ENCODE measurements at regions of chr1 and their contacts with region 1.

Region 1: GRCh38 chr1:167517535-167518330 is 596 bp downstream of the CD247 start:
- DNase-seq: peak; percentile 56 to 92 (median 86)
- ATAC-seq: peak; percentile 75
- H3K4me3 ChIP-seq: peak overlapping the region; percentile 94 to 98
- H3K4me3 Mint-ChIP-seq: peak overlapping the region; percentile 99
- H3K27ac ChIP-seq: peak overlapping the region; percentile 94 to 95
- H3K27ac Mint-ChIP-seq: peak overlapping the region; percentile 100
- H3K4me1 ChIP-seq: peaks cover 40% of the 10 kb centered on the region
- H3K4me1 Mint-ChIP-seq: peaks cover 51% of the 10 kb centered on the region
- H3K27me3 ChIP-seq: no peaks in the 10 kb centered on the region
- H3K27me3 Mint-ChIP-seq: no peaks in the 10 kb centered on the region
- CTCF ChIP-seq: no peak

Region 2: DNA sequence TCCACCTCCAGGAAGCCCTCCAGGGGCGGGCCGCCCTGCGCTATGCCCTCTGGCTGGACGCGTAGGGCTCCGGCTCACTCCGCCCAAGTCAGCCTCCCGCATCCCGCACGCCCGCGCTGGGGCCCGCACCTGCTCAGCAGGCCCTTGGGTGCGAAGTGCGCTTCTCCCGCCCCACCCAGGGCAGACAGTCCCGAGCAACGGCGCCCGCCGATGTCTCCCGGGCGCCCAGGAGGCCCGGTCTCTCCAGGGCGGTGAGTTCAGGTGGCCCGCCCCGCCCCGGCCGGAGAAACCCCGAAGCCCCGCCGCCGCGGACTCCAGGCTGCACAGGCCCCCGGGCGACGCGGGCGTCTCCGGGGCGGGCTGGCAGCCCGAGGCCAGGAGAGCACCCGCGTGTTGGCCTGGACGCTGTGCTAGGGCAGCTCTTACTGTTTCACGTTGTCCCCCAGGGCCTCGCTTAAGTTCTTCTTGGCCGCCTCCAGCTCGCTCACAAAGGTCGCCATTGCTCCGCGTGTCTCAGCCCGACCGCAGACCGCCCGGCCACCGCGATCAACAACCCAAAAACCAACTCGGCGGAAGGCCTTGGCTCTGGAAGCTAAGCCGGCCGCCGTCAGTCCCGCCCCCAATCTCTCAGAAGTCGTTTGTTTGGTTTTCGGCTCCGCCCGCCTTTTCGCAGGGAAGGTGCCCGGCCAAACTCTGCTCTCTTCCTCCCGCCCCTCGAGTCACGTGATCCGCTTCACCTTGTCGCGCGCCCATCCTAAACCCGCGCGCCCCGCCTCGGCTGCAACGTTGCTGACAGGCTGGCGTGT is 641.8 kb before region 1 on chr1 and contains the start of gene TADA1:
- CTCF ChIA-PET with region 1: no interaction called
- POLR2A ChIA-PET with region 1: interaction called, 3 read pairs
- intact Hi-C with region 1: loop called (anchors 5 to 10 kb)
- DNase-seq: peak; percentile 96 to 99 (median 98)
- ATAC-seq: peak; percentile 90
- H3K4me3 ChIP-seq: peak within 1 kb of the TSS; percentile 71 to 84
- H3K4me3 Mint-ChIP-seq: peak within 1 kb of the TSS; percentile 97
- H3K27ac ChIP-seq: peak within 1 kb of the TSS; percentile 74 to 79
- H3K27ac Mint-ChIP-seq: peak within 1 kb of the TSS; percentile 99
- H3K4me1 ChIP-seq: peaks cover 18% of the 10 kb centered on the region
- H3K4me1 Mint-ChIP-seq: peaks cover 49% of the 10 kb centered on the region
- H3K27me3 ChIP-seq: no peaks in the 10 kb centered on the region
- H3K27me3 Mint-ChIP-seq: no peaks in the 10 kb centered on the region
- CTCF ChIP-seq: no peak
- total RNA-seq, gene TADA1: 16.7 to 18.5 TPM

Region 3: GRCh38 chr1:167442124-167442848 is 75.4 kb before region 1 on chr1:
- CTCF ChIA-PET with region 1: interaction called, 55 read pairs
- POLR2A ChIA-PET with region 1: interaction called, 51 read pairs
- intact Hi-C with region 1: loop called (anchors 1 to 5 kb)
- DNase-seq: peak; percentile 78 to 91 (median 89)
- ATAC-seq: peak; percentile 80
- H3K4me3 ChIP-seq: no peak overlapping the region
- H3K4me3 Mint-ChIP-seq: no peak overlapping the region
- H3K27ac ChIP-seq: peak overlapping the region in 1 of 2 experiments; percentile 71
- H3K27ac Mint-ChIP-seq: peak overlapping the region; percentile 85
- H3K4me1 ChIP-seq: peaks cover 81% of the 10 kb centered on the region
- H3K4me1 Mint-ChIP-seq: peaks cover 91% of the 10 kb centered on the region
- H3K27me3 ChIP-seq: no peaks in the 10 kb centered on the region
- H3K27me3 Mint-ChIP-seq: no peaks in the 10 kb centered on the region
- CTCF ChIP-seq: peak; percentile 75

Region 4: DNA sequence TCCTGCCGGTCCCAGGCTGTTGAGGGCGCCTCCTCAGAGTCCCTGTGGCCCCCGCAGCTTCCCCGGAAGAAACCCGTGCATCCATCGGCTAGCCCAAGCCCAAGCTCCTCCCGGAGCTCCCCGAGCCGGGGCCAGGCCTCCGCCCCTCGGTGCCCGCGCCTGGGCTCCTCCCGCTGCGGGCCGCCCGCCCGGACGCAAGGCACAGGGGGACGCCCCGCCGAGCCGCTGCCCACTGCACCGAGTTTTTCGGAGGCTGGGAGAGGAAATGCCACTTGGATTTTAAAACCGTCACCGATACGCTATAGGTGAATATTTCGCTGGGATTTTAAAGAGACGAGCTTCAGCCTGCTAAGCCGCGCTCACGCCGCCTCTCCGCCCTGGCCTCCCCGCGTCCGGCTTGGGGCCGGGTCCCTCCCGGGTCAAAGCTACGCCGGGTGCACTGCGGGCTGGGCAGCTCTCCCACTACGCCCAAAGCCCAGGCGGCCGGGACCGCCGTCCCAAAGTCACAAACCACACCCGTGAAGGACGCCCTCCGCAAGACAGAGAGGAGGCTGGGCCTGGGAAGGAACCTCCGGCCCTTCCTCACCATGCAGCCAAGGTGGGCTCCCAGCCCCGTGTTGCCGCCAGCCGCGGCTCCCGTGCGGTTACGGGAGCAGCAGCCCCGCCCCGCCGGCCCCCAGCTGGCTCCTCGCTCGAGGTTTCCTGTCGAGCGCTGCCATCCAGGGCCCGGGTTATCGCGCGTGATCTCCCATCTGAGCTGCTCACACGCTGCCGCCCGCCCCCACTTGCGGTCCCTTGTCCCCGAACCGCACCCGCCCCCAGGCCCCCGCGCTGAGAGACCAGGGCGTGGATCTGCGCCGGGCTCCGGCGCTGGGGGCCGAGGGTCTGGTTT is 62.6 kb before region 1 on chr1:
- CTCF ChIA-PET with region 1: interaction called, 27 read pairs
- POLR2A ChIA-PET with region 1: interaction called, 49 read pairs
- intact Hi-C with region 1: loop called (anchors 2 kb)
- DNase-seq: peak; percentile 65 to 93 (median 83)
- ATAC-seq: peak; percentile 63
- H3K4me3 ChIP-seq: peak overlapping the region; percentile 56 to 89
- H3K4me3 Mint-ChIP-seq: peak overlapping the region; percentile 87
- H3K27ac ChIP-seq: peak overlapping the region; percentile 84 to 91
- H3K27ac Mint-ChIP-seq: peak overlapping the region; percentile 96
- H3K4me1 ChIP-seq: peaks cover 68% of the 10 kb centered on the region
- H3K4me1 Mint-ChIP-seq: peaks cover 74% of the 10 kb centered on the region
- H3K27me3 ChIP-seq: no peaks in the 10 kb centered on the region
- H3K27me3 Mint-ChIP-seq: no peaks in the 10 kb centered on the region
- CTCF ChIP-seq: no peak

Region 5: DNA sequence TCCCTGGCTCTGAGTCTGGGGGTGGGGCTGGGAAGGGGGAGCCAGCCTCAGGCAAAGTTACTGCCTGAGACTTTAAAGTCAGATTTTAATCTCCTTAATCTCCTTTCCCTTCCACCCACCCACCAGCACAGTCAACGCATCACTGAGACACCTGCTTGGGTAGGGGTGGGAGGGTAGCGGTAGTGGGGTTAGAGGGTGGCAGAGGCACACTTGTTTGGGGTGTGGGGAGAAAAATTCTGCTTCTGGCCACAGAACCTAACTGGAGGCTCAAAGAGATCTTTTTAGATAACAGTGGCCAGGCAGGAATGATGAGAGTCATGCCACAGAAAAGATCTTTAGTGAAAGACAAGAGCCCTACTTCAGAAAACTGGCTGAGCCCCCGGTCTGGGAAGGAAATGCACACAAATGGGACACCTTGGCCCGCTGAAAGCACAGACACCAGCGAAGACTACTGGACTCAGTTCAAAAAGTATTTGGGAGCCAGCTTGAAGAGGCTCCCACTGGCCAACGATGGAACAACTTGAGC is 43.5 kb before region 1 on chr1:
- CTCF ChIA-PET with region 1: interaction called, 5 read pairs
- POLR2A ChIA-PET with region 1: interaction called, 14 read pairs
- intact Hi-C with region 1: no loop called
- DNase-seq: peak in 6 of 9 experiments; percentile 43 to 76 (median 60)
- ATAC-seq: peak; percentile 82
- H3K4me3 ChIP-seq: peak overlapping the region; percentile 5 to 15
- H3K4me3 Mint-ChIP-seq: peak overlapping the region; percentile 78
- H3K27ac ChIP-seq: peak overlapping the region in 1 of 2 experiments; percentile 76
- H3K27ac Mint-ChIP-seq: peak overlapping the region; percentile 91
- H3K4me1 ChIP-seq: peaks cover 72% of the 10 kb centered on the region
- H3K4me1 Mint-ChIP-seq: peaks cover 91% of the 10 kb centered on the region
- H3K27me3 ChIP-seq: no peaks in the 10 kb centered on the region
- H3K27me3 Mint-ChIP-seq: no peaks in the 10 kb centered on the region
- CTCF ChIP-seq: no peak

Region 6: DNA sequence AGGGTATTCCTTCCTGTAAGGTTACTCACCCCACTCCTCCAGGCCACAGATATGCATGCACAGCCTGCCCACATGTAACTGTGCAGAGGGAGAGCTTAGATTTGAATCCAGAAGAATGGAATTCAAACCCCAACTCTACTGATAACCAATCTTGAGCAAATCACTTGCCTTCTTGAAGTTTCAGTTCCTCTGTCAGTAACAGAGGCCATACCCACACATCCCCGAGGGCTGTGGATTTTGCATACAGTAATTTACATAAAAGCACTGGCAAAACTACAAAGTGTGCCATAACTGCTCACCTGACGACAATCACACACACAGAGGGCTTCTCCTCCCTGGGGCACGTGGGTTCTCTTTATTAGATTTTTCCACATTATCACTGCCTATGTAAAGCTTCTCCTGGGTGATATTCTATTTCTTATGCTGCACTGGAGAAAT is 18.1 kb before region 1 on chr1:
- CTCF ChIA-PET with region 1: interaction called, 7 read pairs
- POLR2A ChIA-PET with region 1: interaction called, 15 read pairs
- intact Hi-C with region 1: loop called (anchors 2 kb)
- DNase-seq: peak in 4 of 9 experiments; percentile 37 to 66 (median 40)
- ATAC-seq: peak; percentile 70
- H3K4me3 ChIP-seq: no peak overlapping the region
- H3K4me3 Mint-ChIP-seq: peak overlapping the region; percentile 58
- H3K27ac ChIP-seq: peak overlapping the region in 1 of 2 experiments; percentile 65
- H3K27ac Mint-ChIP-seq: peak overlapping the region; percentile 86
- H3K4me1 ChIP-seq: peaks cover 100% of the 10 kb centered on the region
- H3K4me1 Mint-ChIP-seq: peaks cover 99% of the 10 kb centered on the region
- H3K27me3 ChIP-seq: no peaks in the 10 kb centered on the region
- H3K27me3 Mint-ChIP-seq: no peaks in the 10 kb centered on the region
- CTCF ChIP-seq: no peak

Region 7: DNA sequence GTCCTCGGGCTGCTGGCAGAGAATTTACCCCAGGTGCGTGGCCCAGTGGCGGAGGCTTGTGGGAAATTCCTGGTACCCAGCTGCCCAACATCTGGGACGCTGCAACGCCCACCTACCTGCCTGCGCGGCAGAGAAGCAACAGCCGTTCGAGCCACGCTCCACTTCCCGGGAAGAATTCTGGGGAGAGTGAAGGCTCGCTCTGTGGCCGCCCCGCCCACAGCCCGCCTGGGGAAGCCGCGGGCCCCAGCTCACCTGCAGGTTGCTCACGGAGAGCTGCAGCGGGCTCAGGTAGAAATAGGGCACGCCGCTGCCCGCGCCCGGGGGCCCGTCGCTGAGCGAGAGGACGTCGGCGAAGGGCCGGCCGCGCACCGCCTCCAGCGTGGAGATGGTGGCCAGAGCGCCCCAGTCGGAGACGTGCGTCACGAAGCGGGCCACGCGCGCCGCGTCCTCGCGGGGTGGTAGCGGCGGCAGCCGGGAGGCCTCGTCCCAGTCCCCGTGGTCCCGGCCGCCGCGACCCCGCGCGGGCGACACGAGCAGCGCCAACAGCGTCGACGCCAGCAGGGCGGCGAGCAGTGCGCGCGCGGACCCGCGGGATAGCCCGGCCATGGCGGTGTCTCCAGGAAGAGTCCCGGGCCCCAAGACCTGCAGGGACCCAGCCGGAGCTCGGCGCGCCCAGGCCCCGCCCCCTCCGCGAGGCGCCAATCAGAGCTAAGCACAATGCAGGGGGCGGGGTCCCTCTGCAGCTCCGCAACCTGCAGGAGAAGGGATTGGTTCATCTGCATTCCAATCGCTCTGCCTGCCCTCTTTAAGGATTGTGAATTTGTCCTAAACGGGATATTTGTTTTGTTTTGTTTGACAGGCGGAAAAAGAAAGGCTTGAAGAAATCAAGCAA is 35.6 kb after region 1 on chr1 and contains the start of gene CREG1:
- CTCF ChIA-PET with region 1: interaction called, 6 read pairs
- POLR2A ChIA-PET with region 1: interaction called, 5 read pairs
- intact Hi-C with region 1: loop called in 1 of 2 experiments (anchors 1 kb)
- DNase-seq: peak; percentile 70 to 93 (median 88)
- ATAC-seq: peak; percentile 97
- H3K4me3 ChIP-seq: peak within 1 kb of the TSS; percentile 62 to 70
- H3K4me3 Mint-ChIP-seq: peak within 1 kb of the TSS; percentile 88
- H3K27ac ChIP-seq: peak within 1 kb of the TSS in 1 of 2 experiments; percentile 57
- H3K27ac Mint-ChIP-seq: no peak within 1 kb of the TSS
- H3K4me1 ChIP-seq: peaks cover 18% of the 10 kb centered on the region
- H3K4me1 Mint-ChIP-seq: peaks cover 47% of the 10 kb centered on the region
- H3K27me3 ChIP-seq: no peaks in the 10 kb centered on the region
- H3K27me3 Mint-ChIP-seq: no peaks in the 10 kb centered on the region
- CTCF ChIP-seq: no peak
- total RNA-seq, gene CREG1: 9.3 to 9.8 TPM

Measured in CD8-positive, alpha-beta T cell (primary cell).